ENCODE measurements at regions of chr19 and their contacts with region 1.

Region 1: GRCh38 chr19:30070968-30071632 is 129.1 kb downstream of the URI1 start:
- ATAC-seq: no peak
- H3K4me3 ChIP-seq: no peak overlapping the region
- H3K27ac ChIP-seq: no peak overlapping the region
- H3K4me1 ChIP-seq: peaks cover 5 to 9% of the 10 kb centered on the region in 2 donors

Region 2: DNA sequence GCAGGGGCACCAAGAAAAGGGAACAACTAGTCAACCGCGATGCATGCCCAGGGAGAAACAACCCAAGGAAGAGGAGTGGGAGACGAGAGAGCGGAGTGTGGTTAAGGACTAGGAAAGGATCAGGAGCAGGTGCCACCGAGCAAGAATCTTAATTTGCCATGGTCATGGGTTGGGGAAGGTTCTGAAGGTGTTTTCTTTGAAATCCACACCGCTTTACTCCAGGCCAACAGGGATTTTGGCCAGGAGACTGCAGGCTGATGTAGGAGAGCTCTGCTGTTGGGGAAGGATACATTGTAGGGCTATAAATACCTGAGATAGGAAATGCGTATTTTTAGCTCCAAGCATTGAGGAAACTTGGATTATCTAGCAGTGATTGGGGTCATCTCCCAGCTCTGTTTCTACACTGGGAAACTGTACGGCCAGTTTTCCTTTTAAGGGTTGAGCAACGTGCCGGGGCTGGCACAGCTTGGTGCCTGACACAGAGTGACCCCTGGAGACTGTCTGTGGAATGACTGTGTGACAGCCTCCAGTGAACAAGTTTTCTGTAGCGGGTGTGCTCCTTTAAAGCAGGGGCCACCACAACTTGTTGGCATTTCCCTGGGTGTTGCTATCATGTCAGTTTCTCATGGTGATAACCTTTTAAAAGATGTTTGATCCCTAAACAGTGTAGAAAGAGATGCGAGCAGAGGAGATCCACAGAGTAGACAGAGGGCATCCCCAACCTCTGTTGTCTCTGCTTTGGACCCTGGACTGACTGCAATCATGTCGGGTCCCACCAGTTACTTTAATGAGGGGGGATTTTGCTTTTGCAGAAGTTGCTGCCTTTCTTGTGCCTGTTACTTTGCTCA is 335.3 kb after region 1 on chr19:
- in situ Hi-C with region 1: loop called in 1 of 9 experiments (anchors 25 kb)
- ATAC-seq: peak; percentile 61 to 98 (median 76)
- H3K4me3 ChIP-seq: no peak overlapping the region
- H3K27ac ChIP-seq: no peak overlapping the region
- H3K4me1 ChIP-seq: peaks cover 17 to 21% of the 10 kb centered on the region in 2 donors

Measured in motor neuron (in vitro differentiated cells).